Activated CD8-positive, alpha-beta T cell treated with anti-CD3 and anti-CD28 coated beads for 36 hours (primary cell): ENCODE measurements at regions of chr11 and their contacts with region 1.

Region 1: GRCh38 chr11:44936525-44936924 is 14.2 kb downstream of the TP53I11 start:
- DNase-seq: peak; percentile 88
- ATAC-seq: peak; percentile 97
- H3K4me3 Mint-ChIP-seq: no peak overlapping the region
- H3K27ac Mint-ChIP-seq: no peak overlapping the region
- H3K4me1 Mint-ChIP-seq: no peaks in the 10 kb centered on the region
- H3K27me3 Mint-ChIP-seq: no peaks in the 10 kb centered on the region
- CTCF ChIP-seq: peak; percentile 97

Region 2: GRCh38 chr11:44858796-44859527 is 77.6 kb before region 1 on chr11:
- CTCF ChIA-PET with region 1: no interaction called
- POLR2A ChIA-PET with region 1: no interaction called
- intact Hi-C with region 1: no loop called
- DNase-seq: no peak
- ATAC-seq: no peak
- H3K4me3 Mint-ChIP-seq: no peak overlapping the region
- H3K27ac Mint-ChIP-seq: no peak overlapping the region
- H3K4me1 Mint-ChIP-seq: peaks cover 35% of the 10 kb centered on the region
- H3K27me3 Mint-ChIP-seq: peaks cover 25% of the 10 kb centered on the region
- CTCF ChIP-seq: no peak

Region 3: DNA sequence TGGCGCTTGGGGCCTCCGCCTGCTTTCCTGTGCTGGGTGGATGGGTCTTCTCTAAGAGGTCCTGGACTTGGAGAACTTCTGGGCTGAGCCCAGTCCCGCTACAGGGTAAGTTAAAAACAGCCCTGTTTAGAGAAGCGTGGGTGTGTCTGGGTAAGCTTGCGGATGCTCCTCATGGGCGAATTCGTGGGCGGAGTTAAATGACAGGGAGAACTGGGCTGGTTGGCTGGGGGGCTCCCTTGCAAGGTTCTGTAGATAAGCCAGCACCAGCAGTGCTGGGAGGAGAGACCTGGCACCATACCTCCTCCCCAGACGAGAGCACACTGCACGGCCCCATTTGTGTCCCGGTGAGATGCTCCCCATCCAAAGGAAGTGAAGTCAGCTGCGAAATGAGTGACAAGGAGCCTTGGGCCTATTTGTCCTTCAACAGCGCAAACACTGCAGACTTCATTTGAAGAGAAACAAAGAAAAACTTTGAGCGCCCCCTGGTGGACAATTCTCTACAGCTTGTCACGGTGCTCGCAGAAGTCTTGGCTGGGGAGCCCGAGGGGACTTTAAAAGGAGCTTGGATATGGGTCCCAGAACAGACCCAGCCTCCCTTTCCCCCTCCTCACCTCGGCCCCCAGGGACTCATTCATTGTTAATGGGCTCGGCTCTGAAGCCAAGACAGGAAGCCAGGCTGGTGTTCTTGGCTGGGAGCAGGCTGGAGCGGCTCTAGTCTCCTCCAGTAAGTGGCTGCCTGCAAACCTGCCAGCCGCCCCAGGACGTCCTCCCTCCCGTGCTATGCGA is 25.3 kb before region 1 on chr11:
- CTCF ChIA-PET with region 1: interaction called, 14 read pairs
- POLR2A ChIA-PET with region 1: no interaction called
- intact Hi-C with region 1: no loop called
- DNase-seq: peak; percentile 94
- ATAC-seq: peak; percentile 89
- H3K4me3 Mint-ChIP-seq: no peak overlapping the region
- H3K27ac Mint-ChIP-seq: no peak overlapping the region
- H3K4me1 Mint-ChIP-seq: peaks cover 4% of the 10 kb centered on the region
- H3K27me3 Mint-ChIP-seq: peaks cover 2% of the 10 kb centered on the region
- CTCF ChIP-seq: peak; percentile 68

Region 4: DNA sequence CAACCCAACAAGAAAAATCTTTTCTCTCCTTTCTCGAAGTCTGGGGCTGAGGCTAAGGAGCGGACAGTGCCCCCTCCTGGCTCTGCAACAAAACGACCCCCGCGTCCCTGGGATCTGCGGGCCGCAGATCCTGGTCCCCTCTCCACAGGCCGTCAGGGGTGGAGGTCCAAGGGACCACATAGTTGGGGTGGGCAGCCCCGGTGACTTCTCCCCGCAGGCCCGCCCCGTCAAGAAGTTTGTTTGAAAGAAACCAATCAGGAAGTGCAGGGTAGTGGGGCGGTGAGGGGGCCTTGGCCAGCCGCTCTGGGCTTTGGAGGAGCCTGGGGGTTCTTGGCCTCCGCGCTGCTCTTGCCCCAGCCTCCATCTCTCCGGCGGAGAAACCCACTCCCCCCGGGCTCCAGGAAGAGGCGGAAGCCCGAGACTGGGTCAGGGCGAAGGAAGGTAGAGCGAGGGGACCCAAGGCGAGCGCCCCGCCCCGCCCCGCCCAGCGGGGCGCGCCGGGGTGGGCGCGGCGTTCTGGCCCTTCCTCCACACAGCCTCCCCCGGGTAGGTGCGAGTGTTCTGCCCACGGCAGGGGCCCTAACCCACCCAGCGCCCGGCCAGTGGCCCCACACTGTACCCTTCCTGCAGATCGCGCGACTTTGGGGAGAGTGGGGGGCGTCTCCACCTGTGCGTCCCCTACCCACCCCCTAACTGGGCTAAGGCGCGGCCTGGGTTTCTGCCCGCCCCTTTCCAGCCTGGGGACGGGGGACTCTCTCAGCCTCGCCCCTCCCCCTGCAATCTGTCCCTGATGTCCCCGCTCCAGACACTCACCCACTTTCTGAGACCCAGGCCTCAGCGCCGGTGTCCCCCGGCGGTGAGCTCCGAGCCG is 12.9 kb after region 1 on chr11:
- CTCF ChIA-PET with region 1: interaction called, 38 read pairs
- POLR2A ChIA-PET with region 1: interaction called, 3 read pairs
- intact Hi-C with region 1: no loop called
- DNase-seq: peak; percentile 44
- ATAC-seq: peak; percentile 35
- H3K4me3 Mint-ChIP-seq: peak overlapping the region; percentile 75
- H3K27ac Mint-ChIP-seq: no peak overlapping the region
- H3K4me1 Mint-ChIP-seq: peaks cover 15% of the 10 kb centered on the region
- H3K27me3 Mint-ChIP-seq: no peaks in the 10 kb centered on the region
- CTCF ChIP-seq: peak; percentile 58

Region 5: GRCh38 chr11:44957776-44958564 is 21.4 kb after region 1 on chr11:
- CTCF ChIA-PET with region 1: interaction called, 17 read pairs
- POLR2A ChIA-PET with region 1: no interaction called
- intact Hi-C with region 1: no loop called
- DNase-seq: no peak
- ATAC-seq: no peak
- H3K4me3 Mint-ChIP-seq: no peak overlapping the region
- H3K27ac Mint-ChIP-seq: no peak overlapping the region
- H3K4me1 Mint-ChIP-seq: peaks cover 14% of the 10 kb centered on the region
- H3K27me3 Mint-ChIP-seq: no peaks in the 10 kb centered on the region
- CTCF ChIP-seq: no peak

Region 6: DNA sequence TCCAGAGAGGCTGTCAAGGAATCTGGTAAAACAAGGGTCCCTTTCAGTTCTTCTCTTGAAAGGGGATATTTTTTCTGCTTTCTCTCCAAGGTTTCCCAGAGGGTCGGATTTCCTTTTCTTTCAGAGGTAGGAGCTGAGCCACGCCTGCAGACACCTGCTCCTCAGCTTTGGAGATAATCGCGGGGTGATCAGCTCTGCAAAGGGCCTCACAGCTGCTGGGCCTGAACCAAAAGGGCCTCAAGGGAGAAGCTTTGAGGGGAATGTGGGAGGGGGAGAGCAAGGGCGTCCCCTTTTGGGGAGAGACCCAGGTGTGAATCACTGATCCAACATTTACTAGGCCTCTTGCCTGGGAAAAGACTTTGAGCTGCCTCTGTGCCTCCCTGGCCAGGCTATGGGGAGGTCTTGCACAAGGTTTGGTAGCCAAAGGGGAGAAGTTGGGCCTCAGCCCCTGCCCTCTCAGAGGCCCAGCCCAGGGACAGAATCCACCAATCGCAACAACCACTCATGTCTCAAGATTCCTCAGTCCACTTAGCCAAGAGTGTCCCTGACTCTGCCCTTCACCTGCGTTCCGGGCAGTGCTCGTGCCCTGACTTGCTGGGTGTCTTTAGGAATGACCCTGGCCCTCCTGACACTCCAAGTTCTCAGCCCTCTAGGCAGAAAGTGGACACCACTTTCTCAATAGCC is 28.1 kb after region 1 on chr11:
- CTCF ChIA-PET with region 1: interaction called, 17 read pairs
- POLR2A ChIA-PET with region 1: no interaction called
- intact Hi-C with region 1: no loop called
- DNase-seq: no peak
- ATAC-seq: no peak
- H3K4me3 Mint-ChIP-seq: no peak overlapping the region
- H3K27ac Mint-ChIP-seq: no peak overlapping the region
- H3K4me1 Mint-ChIP-seq: no peaks in the 10 kb centered on the region
- H3K27me3 Mint-ChIP-seq: no peaks in the 10 kb centered on the region
- CTCF ChIP-seq: no peak

Region 7: GRCh38 chr11:45089676-45090499 is 153.4 kb after region 1 on chr11:
- CTCF ChIA-PET with region 1: interaction called, 942 read pairs
- POLR2A ChIA-PET with region 1: no interaction called
- intact Hi-C with region 1: no loop called
- DNase-seq: peak; percentile 46
- ATAC-seq: peak; percentile 46
- H3K4me3 Mint-ChIP-seq: no peak overlapping the region
- H3K27ac Mint-ChIP-seq: no peak overlapping the region
- H3K4me1 Mint-ChIP-seq: peaks cover 19% of the 10 kb centered on the region
- H3K27me3 Mint-ChIP-seq: no peaks in the 10 kb centered on the region
- CTCF ChIP-seq: no peak

Region 8: GRCh38 chr11:45285930-45286632 is 349.6 kb after region 1 on chr11 and contains the start of gene SYT13:
- CTCF ChIA-PET with region 1: interaction called, 11 read pairs
- POLR2A ChIA-PET with region 1: interaction called, 3 read pairs
- intact Hi-C with region 1: no loop called
- DNase-seq: no peak
- ATAC-seq: no peak
- H3K4me3 Mint-ChIP-seq: no peak within 1 kb of the TSS
- H3K27ac Mint-ChIP-seq: no peak within 1 kb of the TSS
- H3K4me1 Mint-ChIP-seq: no peaks in the 10 kb centered on the region
- H3K27me3 Mint-ChIP-seq: peaks cover 61% of the 10 kb centered on the region
- CTCF ChIP-seq: no peak
- total RNA-seq, gene SYT13: not detected